GM12878 (cell line): ENCODE measurements at regions of chrX and their contacts with region 1.

Region 1: GRCh38 chrX:26908218-26908617 is 554.9 kb downstream of the PPP4R3C start:
- DNase-seq: no peak
- ATAC-seq: no peak
- H3K4me3 ChIP-seq: no peak overlapping the region
- H3K27ac ChIP-seq: no peak overlapping the region
- H3K4me1 ChIP-seq: no peaks in the 10 kb centered on the region
- H3K27me3 ChIP-seq: no peaks in the 10 kb centered on the region
- CTCF ChIP-seq: no peak
- EP300 ChIP-seq: no peak
- POLR2A ChIP-seq: no peak
- RAD21 ChIP-seq: no peak

Region 2: GRCh38 chrX:26851981-26852380 is 56.2 kb before region 1 on chrX:
- CTCF ChIA-PET with region 1: interaction called, 4 read pairs
- POLR2A ChIA-PET with region 1: no interaction called
- RAD21 ChIA-PET with region 1: interaction called, 12 read pairs
- SMC1A ChIA-PET with region 1: interaction called, 14 read pairs
- in situ Hi-C with region 1: no loop called
- intact Hi-C with region 1: no loop called
- DNase-seq: no peak
- ATAC-seq: peak; percentile 96
- H3K4me3 ChIP-seq: no peak overlapping the region
- H3K27ac ChIP-seq: no peak overlapping the region
- H3K4me1 ChIP-seq: no peaks in the 10 kb centered on the region
- H3K27me3 ChIP-seq: no peaks in the 10 kb centered on the region
- CTCF ChIP-seq: peak in 2 of 3 experiments; percentile 27 to 53; a peak in 3 of 6 replicates
- EP300 ChIP-seq: no peak
- POLR2A ChIP-seq: no peak
- RAD21 ChIP-seq: peak; percentile 64

Region 3: DNA sequence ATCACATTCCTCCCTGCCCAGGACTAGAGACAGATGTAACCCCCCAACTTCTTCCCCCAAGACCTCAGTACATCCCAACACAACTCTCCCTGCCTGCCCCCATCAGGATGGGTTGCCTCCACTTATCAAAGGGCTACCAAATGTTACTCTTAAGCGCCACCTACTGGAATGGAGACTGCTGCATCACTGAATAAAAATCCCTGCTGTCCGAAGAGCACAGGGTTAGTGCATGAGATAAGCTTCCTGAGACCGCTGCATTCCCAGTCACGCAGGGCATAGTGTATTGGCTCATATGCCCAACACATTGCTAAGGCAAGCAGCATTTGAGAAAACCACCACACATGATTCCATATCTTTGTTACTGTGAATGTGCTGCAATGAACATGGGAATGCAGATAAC is 10.4 kb after region 1 on chrX:
- CTCF ChIA-PET with region 1: interaction called, 11 read pairs
- POLR2A ChIA-PET with region 1: interaction called, 4 read pairs
- RAD21 ChIA-PET with region 1: interaction called, 3 read pairs
- SMC1A ChIA-PET with region 1: interaction called, 6 read pairs
- in situ Hi-C with region 1: no loop called
- intact Hi-C with region 1: no loop called
- DNase-seq: no peak
- ATAC-seq: peak; percentile 87
- H3K4me3 ChIP-seq: no peak overlapping the region
- H3K27ac ChIP-seq: no peak overlapping the region
- H3K4me1 ChIP-seq: no peaks in the 10 kb centered on the region
- H3K27me3 ChIP-seq: no peaks in the 10 kb centered on the region
- CTCF ChIP-seq: peak; percentile 55 to 63 (median 60)
- EP300 ChIP-seq: no peak
- POLR2A ChIP-seq: no peak
- RAD21 ChIP-seq: peak; percentile 69